Posterior vena cava (tissue), 2 donors: ENCODE measurements at regions of chr4 and their contacts with region 1.

Region 1: DNA sequence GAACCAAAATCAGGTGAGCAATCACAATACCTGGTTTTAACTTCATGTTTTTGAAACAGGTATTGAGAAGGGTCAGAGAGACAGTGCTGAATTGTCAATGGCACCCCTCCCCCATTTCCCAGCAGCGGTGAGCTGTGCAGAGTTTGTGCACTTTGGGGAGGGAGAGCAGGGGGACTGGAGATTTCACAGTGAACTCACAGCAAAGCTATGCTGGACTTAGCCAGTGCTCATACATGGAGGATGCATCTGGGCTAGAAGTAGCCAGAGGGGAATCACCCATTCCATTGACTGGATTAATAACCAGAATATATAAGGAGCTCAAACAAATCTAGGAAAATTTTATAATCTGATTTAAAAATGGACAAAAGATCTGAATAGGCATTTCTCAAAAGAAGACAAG is 612.6 kb downstream of the STPG2 start:
- DNase-seq: no peak

Region 2: GRCh38 chr4:96755569-96756484 is 774.8 kb before region 1 on chr4:
- intact Hi-C with region 1: loop called in 1 of 2 experiments (anchors 5 kb)
- DNase-seq: no peak

Region 3: DNA sequence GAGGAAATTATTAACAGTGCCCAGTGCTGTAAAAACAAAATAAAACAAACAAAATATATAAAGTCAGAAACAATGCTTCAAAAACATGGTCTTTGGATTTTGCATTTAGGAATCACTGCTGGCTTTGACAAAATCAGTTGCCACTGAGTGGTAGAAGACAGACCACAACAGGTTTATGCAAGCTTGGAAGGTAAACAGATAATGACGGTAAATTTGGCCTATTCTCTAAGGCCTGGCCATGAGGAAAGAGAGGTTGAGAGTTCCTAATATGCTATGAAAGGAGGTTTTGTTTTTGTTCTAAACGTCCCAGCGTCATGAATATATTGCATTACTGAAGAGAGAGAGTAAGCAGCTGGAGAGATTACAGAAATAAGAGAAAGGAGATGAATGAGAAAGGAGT is 16.8 kb before region 1 on chr4:
- intact Hi-C with region 1: no loop called
- DNase-seq: no peak